AG04449 (cell line): ENCODE measurements at regions of chr1 and their contacts with region 1.

Region 1: DNA sequence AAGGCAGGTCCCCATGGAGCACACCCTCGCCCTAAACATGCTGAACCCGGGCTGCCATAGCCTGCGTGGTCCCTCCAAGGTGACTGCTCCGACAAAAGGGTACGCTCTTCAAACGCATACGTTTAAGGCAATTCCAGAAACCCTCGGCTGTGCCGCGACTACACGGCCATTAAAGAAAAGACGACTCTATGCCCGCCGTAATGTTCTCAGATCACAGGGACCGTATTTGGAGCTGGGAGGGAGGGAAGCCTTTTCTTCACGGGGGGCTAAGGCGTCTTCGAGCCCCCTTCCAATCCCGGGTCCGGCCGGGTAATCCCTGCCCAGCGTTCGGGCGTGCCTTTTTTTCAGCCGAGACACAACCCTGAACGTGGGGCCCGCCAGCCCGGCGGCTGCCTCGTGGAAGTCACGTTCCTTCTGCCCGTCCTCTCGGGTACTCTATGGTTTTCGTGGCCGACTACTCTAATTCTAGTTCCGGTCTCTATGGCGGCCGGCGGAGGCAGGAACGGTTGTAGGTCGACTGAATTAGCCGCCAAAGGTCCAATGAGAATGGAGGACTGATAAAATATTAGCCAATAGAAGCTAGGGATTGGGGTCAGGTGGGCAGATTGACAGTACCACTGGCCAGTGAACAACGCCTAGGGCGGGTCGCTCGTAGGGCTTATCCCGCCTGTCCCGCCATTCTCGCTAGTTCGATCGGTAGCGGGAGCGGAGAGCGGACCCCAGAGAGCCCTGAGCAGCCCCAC is at the start of gene YBX1:
- DNase-seq: peak; percentile 96
- H3K4me3 ChIP-seq: peak within 1 kb of the TSS; percentile 83
- CTCF ChIP-seq: no peak

Region 2: DNA sequence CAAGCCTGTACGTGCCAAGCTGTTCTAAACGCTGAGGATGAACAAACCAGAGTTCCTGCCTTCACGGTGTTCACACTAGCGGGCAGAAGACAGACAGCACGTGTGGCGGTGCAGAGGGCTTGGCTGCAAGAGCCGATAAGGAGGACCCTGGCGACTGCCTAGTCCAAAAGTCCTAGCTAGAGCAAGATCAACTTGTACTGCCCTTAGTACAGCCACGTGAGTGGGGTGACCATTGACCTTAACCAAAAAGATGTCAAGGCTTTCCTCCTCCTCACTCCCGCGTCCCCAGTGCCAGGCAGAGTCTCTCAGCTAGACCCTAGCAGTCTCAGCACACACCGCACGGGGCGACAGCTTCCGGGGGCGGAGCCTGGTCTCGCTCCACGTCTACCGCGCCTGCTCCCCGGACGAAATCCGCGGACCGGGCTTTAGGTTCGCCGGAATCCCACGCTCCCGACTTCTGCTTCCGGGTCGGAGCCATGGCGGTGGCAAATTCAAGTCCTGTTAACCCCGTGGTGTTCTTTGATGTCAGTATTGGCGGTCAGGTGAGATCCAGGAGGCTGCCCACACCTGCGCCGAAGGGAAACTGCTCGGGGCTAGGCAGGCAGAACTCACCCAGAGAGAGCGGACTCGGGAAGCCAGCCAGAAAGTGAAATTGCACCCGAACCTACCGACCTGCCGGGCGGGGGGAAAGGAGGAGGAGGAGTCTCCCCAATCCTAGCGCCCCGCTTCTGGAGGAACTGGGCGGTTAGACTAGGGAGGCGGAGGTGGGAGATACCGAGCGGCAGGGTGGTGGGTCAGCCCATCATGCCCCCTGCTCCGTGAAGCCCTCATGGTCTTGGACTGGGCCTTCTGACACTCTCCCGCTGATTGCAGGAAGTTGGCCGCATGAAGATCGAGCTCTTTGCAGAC is 23.7 kb before region 1 on chr1 and contains the start of gene PPIH:
- CTCF ChIA-PET with region 1: interaction called, 7 read pairs
- POLR2A ChIA-PET with region 1: interaction called, 18 read pairs
- DNase-seq: peak; percentile 34
- H3K4me3 ChIP-seq: peak within 1 kb of the TSS; percentile 93
- CTCF ChIP-seq: peak; percentile 37